MCF 10A (cell line): ENCODE measurements at regions of chr2 and their contacts with region 1.

Region 1: DNA sequence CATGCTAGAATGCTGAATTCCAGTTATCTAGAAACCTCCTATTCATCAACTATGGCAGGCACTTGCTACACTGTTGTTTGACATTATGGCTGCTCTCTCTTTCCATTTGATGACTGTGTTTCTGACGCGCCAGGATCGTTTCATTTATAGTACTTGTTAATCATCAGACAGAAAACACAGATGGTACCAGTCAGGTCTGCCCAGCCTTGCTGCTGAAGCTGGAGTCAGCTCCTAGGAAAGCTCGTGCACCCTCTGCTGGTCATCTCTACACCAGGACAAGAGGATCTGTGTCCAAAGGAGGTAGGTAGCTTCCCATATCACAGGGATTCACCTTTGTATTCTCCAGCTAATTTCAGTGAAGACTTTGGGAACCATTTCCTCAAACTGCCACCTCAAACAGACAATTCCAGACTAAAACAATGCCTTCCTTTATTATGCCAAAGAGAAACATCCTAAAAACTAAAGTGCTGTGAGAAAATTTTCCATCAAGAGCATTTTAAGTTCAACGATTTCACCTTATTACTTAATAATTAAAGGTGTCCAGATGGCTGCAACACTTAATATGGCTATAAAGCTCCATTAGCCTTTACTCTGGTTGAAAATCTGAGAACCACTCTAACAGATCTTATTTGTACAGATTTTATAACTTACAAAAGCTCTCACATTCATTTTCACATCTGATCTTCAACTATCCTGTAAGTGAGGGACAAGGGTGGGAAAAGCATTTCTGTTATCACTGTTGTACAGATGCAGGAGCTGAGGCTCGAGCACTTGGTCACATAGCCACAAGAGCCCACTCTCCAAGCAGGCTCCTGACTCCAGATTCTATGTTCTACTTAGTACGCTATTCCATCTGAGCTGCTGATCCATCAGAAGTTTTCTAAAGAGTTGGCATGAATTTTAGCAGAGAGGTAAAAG is 17.5 kb downstream of the METTL8 start:
- DNase-seq: peak; percentile 95
- H3K4me3 Mint-ChIP-seq: peak overlapping the region; percentile 13
- H3K27ac Mint-ChIP-seq: no peak overlapping the region
- H3K4me1 Mint-ChIP-seq: peaks cover 13% of the 10 kb centered on the region
- H3K27me3 Mint-ChIP-seq: no peaks in the 10 kb centered on the region
- CTCF ChIP-seq: peak; percentile 78

Region 2: GRCh38 chr2:170973492-170974303 is 442.6 kb before region 1 on chr2:
- CTCF ChIA-PET with region 1: interaction called, 22 read pairs
- POLR2A ChIA-PET with region 1: interaction called, 4 read pairs
- intact Hi-C with region 1: loop called (anchors 1 kb)
- DNase-seq: peak; percentile 86
- H3K4me3 Mint-ChIP-seq: peak overlapping the region; percentile 71
- H3K27ac Mint-ChIP-seq: peak overlapping the region; percentile 19
- H3K4me1 Mint-ChIP-seq: no peaks in the 10 kb centered on the region
- H3K27me3 Mint-ChIP-seq: no peaks in the 10 kb centered on the region
- CTCF ChIP-seq: peak; percentile 97

Region 3: DNA sequence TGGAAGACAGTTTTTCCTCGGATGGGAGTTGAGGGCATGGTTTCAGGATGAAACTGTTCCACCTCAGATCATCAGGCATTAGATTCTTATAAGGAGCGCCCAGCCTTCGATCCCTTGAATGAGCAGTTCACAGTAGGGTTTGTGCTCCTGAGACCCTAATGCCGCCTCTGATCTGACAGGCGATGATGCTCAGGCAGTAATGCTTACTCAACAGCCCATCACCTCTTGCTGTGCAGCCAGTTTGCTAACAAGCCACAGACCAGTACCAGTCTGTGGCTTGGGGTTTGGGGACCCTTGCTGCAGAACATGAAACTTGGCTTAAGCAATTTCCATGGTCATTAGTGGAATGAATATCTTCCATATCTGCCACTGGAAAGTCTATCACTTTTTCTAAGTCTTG is 430.9 kb before region 1 on chr2:
- CTCF ChIA-PET with region 1: interaction called, 5 read pairs
- POLR2A ChIA-PET with region 1: no interaction called
- intact Hi-C with region 1: loop called (anchors 5 kb)
- DNase-seq: no peak
- H3K4me3 Mint-ChIP-seq: no peak overlapping the region
- H3K27ac Mint-ChIP-seq: no peak overlapping the region
- H3K4me1 Mint-ChIP-seq: no peaks in the 10 kb centered on the region
- H3K27me3 Mint-ChIP-seq: peaks cover 14% of the 10 kb centered on the region
- CTCF ChIP-seq: no peak

Region 4: GRCh38 chr2:171271971-171272436 is 144.3 kb before region 1 on chr2:
- CTCF ChIA-PET with region 1: interaction called, 6 read pairs
- POLR2A ChIA-PET with region 1: interaction called, 3 read pairs
- intact Hi-C with region 1: loop called (anchors 1 kb)
- DNase-seq: peak; percentile 98
- H3K4me3 Mint-ChIP-seq: peak overlapping the region; percentile 42
- H3K27ac Mint-ChIP-seq: peak overlapping the region; percentile 79
- H3K4me1 Mint-ChIP-seq: peaks cover 19% of the 10 kb centered on the region
- H3K27me3 Mint-ChIP-seq: no peaks in the 10 kb centered on the region
- CTCF ChIP-seq: no peak

Region 5: DNA sequence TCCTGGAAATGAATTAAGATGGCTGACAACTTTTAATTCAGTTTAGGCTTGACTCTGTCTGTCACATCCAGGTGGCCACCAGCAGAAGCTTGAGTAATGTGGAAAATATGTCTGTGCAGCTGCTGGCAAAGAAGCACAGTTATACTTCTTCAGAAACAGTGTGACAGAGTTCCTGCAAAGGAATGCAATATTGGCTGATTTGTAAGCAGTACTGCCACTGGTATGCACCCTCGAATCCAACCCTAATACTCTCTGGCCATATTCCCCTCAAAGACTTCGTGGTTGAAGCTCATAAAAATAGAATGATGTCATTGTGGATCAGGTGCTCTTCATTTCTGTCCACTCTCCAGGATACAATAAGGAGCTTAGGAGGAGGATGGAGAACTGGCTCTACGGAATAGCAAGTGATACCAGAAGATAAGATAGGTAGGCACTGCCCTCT is 68.7 kb before region 1 on chr2:
- CTCF ChIA-PET with region 1: interaction called, 11 read pairs
- POLR2A ChIA-PET with region 1: interaction called, 6 read pairs
- intact Hi-C with region 1: loop called (anchors 5 kb)
- DNase-seq: peak; percentile 2
- H3K4me3 Mint-ChIP-seq: no peak overlapping the region
- H3K27ac Mint-ChIP-seq: peak overlapping the region; percentile 65
- H3K4me1 Mint-ChIP-seq: peaks cover 16% of the 10 kb centered on the region
- H3K27me3 Mint-ChIP-seq: no peaks in the 10 kb centered on the region
- CTCF ChIP-seq: no peak

Region 6: DNA sequence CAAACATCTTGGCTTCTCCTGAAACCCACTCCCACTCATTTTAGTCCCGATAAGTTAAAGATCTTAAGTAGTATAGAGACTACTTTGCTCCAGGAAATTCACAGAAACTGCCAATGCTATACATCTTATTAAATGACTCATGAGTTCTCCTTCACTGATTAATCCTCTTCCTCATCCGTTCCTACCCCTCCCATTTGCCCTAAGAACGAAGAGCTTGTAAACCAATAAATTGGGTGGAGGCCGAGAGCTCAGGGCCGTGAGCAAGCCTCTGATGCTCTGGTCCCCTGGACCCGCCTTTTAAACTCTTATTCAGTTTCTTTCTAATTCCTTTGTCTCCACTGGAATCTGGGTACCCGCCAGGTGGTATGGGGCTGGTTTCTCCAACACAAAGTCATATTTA is 51.0 kb before region 1 on chr2:
- CTCF ChIA-PET with region 1: interaction called, 3 read pairs
- POLR2A ChIA-PET with region 1: interaction called, 3 read pairs
- intact Hi-C with region 1: loop called (anchors 5 kb)
- DNase-seq: peak; percentile 58
- H3K4me3 Mint-ChIP-seq: peak overlapping the region; percentile 40
- H3K27ac Mint-ChIP-seq: peak overlapping the region; percentile 58
- H3K4me1 Mint-ChIP-seq: peaks cover 11% of the 10 kb centered on the region
- H3K27me3 Mint-ChIP-seq: no peaks in the 10 kb centered on the region
- CTCF ChIP-seq: no peak

Region 7: GRCh38 chr2:171433763-171434670 is 17.7 kb after region 1 on chr2 and contains the starts of genes DCAF17 and METTL8:
- CTCF ChIA-PET with region 1: interaction called, 43 read pairs
- POLR2A ChIA-PET with region 1: interaction called, 49 read pairs
- intact Hi-C with region 1: no loop called
- DNase-seq: peak; percentile 97
- H3K4me3 Mint-ChIP-seq: peak within 1 kb of the TSS; percentile 98
- H3K27ac Mint-ChIP-seq: peak within 1 kb of the TSS; percentile 93
- H3K4me1 Mint-ChIP-seq: peaks cover 17% of the 10 kb centered on the region
- H3K27me3 Mint-ChIP-seq: no peaks in the 10 kb centered on the region
- CTCF ChIP-seq: peak; percentile 10
- total RNA-seq, gene DCAF17: 20.8 and 21.3 TPM in 2 replicates
- total RNA-seq, gene METTL8: 28.4 and 55.1 TPM in 2 replicates